Esophagus squamous epithelium (tissue), 5 donors: ENCODE measurements at regions of chr10 and their contacts with region 1.

Region 1: DNA sequence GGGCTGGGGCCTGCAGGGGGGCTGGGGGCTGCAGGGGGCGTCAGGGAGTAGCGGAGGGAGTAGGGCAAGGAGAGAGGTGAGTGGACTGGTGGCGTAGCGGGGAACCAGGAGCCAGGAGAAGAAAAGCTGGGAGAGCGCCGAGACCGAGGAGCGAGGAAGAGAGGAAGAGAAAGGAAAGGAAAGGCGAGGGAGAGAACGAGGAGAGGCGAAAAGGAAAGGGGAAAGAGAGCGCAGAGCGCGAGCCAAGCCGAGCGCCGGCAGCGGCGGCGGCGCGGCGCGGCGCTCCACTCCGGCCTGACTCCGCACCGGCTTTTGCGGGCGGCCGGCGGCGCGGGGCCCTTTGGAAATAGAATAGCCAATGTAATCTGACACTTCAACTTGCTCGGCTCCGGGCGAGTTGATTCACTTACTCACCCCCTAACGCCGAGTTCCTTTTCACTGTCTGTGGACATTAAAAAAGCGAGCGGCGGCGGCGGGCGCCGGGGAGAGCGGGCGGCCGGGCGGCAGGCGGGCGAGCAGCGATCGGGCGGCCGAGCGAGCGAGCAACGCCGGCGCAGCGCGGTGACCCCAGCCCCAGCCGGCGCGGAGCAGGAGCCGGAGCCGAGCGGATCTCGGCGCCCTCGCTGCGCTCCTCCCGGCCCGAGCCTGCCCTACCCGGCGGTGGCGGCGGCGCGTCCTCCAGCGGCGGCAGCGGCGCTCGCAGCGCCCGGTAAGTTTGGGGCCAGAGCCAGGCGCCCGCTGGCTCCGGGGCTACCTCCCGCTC is at the start of gene ZMIZ1:
- DNase-seq: peak; percentile 60
- H3K4me3 ChIP-seq: peak within 1 kb of the TSS; percentile 84 to 96 (median 86)
- H3K27ac ChIP-seq: peak within 1 kb of the TSS; percentile 97 to 100 (median 98)
- H3K4me1 ChIP-seq: peaks cover 33 to 53% (median 37%) of the 10 kb centered on the region in 3 donors
- H3K27me3 ChIP-seq: no peaks in the 10 kb centered on the region
- CTCF ChIP-seq: peak in 3 of 6 experiments; percentile 9 to 36 (median 23)
- POLR2A ChIP-seq: peak in 3 of 4 donors; percentile 27 to 92 (median 88)
- total RNA-seq, gene ZMIZ1: 28.2 to 79.5 (median 40.4) TPM

Region 2: DNA sequence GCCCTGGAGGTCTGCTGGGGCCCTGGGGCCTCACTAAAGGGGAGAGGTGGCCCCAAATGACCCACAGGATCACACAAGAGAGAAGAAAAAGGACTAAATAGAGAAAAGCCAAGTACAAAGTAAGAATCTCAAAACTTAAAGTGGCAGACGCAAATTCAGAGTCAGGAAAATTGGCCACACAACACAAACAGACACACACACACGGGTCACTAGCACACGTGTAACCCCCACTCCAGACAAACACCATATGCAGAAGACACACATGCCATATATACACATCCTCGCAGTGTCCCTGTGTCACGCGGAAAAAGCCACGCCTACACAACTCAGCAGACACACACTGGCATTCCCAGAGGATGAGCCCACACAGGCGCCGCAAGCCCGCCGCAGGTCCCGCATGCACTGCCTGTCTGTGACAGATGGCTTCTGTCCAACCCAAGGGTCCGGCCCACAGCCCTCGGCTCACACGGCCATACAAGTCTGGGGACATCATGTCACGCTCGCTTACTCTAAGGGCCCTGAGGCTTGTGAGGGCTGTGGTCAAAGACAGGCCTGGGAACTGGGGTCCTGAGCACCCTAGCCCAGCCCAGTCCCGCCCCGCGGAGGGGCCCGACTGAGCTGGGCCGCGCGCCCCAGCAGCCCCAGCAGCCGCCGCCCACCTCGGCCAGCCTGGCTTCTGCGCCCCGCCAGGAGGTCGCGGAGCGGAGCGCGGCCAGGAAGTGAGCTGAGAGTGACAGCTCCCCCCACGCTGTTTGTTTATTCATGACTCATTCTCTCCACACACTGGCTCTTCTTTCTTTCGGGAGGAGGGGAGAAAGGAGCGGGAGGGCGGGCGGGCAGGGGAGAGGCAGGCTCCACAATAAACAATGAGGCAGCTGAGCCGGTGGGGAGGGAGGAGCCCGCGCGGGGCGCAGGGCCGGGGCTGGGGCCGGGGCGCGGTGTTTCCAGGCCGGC is 95.5 kb before region 1 on chr10:
- intact Hi-C with region 1: loop called (anchors 5 kb)
- DNase-seq: no peak
- H3K4me3 ChIP-seq: peak overlapping the region; percentile 36 to 77 (median 58)
- H3K27ac ChIP-seq: peak overlapping the region; percentile 93 to 99 (median 94)
- H3K4me1 ChIP-seq: peaks cover 36 to 59% (median 37%) of the 10 kb centered on the region in 3 donors
- H3K27me3 ChIP-seq: no peaks in the 10 kb centered on the region
- CTCF ChIP-seq: peak in 1 of 6 experiments; percentile 12
- POLR2A ChIP-seq: peak in 1 of 4 donors; percentile 45

Region 3: DNA sequence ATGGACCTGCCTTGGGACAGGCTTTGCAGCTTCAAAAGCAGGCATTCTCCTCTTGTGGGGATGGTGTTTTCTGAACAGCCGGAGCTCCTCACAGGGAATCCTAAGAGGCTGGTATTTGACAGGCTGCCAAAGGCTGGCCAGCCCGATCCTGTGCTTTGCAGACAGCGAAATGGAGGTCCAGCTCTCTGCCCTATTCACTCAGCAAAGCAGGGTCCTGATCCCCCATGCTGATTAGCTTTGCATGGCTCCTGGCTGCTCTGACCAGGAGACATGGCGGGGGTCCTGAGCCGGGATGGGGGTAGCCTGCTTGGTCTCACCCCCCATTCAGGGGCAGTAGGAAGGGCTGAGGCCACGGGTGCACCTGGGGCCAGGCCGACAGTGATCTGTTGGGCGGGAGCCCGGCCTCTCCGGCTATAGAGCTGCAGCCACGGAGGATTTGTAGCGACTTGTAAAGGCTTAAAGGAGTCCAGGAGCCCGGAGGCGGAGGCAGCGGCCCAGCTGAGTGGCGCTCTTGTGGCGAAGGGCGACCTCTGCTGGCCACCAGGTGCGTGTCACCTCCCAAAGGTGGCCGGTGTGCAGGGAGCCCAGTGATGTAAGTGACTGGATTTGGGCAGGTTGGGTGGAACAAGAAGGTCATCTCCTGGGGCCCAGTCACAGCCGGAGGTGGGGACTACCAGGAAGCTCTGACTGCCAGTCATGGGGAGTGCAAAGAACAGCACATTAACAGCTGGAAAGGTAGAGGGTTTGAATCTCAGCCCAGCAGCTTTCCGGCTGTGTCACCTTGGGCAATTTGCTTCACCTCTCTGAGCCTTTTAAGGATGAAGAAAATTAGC is 126.6 kb after region 1 on chr10:
- intact Hi-C with region 1: loop called (anchors 5 kb)
- DNase-seq: peak; percentile 37
- H3K4me3 ChIP-seq: no peak overlapping the region
- H3K27ac ChIP-seq: peak overlapping the region; percentile 17 to 71 (median 64)
- H3K4me1 ChIP-seq: peaks cover 8 to 60% (median 31%) of the 10 kb centered on the region in 3 donors
- H3K27me3 ChIP-seq: no peaks in the 10 kb centered on the region
- CTCF ChIP-seq: peak; percentile 90 to 98 (median 94)
- POLR2A ChIP-seq: no peak